ENCODE measurements at regions of chrX and their contacts with region 1.

Region 1: GRCh38 chrX:151801993-151802392 is 67.4 kb downstream of the CNGA2 start:
- DNase-seq: no peak
- H3K4me3 ChIP-seq: no peak overlapping the region
- H3K27ac ChIP-seq: no peak overlapping the region
- H3K4me1 ChIP-seq: no peaks in the 10 kb centered on the region
- H3K27me3 ChIP-seq: no peaks in the 10 kb centered on the region
- CTCF ChIP-seq: no peak
- EP300 ChIP-seq: no peak
- POLR2A ChIP-seq: no peak

Region 2: DNA sequence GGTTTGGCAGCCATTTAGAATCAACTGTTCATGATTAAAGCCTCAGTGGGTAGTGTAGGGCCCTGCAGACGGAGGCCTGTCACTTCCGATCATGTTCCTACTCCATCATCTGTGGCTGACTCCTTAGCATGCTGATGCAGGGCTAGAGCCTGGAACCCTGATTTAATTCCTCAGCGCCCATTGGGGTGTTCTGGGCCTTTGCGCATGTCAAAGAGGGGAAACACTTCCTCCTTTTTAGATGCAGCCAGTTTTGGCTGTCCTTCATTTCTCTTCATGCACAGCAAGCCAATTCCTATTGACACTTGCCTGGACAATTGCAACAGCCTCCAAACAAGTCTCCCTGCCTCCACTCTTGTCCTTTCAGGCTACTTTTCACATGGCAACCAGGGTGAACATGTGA is 58.8 kb after region 1 on chrX:
- intact Hi-C with region 1: loop called in 1 of 4 experiments (anchors 10 kb)
- DNase-seq: no peak
- H3K4me3 ChIP-seq: no peak overlapping the region
- H3K27ac ChIP-seq: no peak overlapping the region
- H3K4me1 ChIP-seq: no peaks in the 10 kb centered on the region
- H3K27me3 ChIP-seq: no peaks in the 10 kb centered on the region
- CTCF ChIP-seq: no peak
- EP300 ChIP-seq: no peak
- POLR2A ChIP-seq: no peak

Measured in ovary (tissue), 10 donors.